ENCODE measurements at regions of chr10 and their contacts with region 1.

Region 1: GRCh38 chr10:22714479-22715289 is at the start of gene PIP4K2A:
- DNase-seq: peak; percentile 72
- H3K4me3 Mint-ChIP-seq: peak within 1 kb of the TSS; percentile 88
- H3K27ac Mint-ChIP-seq: peak within 1 kb of the TSS; percentile 85
- H3K4me1 Mint-ChIP-seq: peaks cover 39% of the 10 kb centered on the region
- H3K27me3 Mint-ChIP-seq: no peaks in the 10 kb centered on the region
- total RNA-seq, gene PIP4K2A: 92.7 and 104 TPM in 2 replicates

Region 2: DNA sequence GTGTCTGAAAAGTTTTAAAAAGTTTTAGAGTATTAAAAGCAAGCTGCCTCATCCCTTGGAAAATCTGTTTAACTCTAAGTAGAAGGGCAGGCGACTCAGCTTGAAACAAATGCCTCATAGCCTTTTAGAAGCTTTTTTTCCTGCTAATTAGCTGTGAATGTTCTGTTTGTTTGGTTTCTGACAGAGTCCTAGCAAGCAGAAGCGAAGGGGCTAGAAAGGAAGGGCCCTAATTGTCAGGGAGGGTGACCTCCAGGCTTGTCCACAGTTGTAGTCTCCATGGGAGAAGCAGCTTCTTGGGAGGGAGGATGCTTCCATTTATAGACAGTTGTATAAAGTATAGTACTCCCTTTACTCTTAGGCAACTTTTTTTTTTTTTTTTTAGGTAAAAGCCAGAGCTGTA is 802.1 kb before region 1 on chr10:
- intact Hi-C with region 1: no loop called
- DNase-seq: no peak
- H3K4me3 Mint-ChIP-seq: no peak overlapping the region
- H3K27ac Mint-ChIP-seq: no peak overlapping the region
- H3K4me1 Mint-ChIP-seq: peaks cover 21% of the 10 kb centered on the region
- H3K27me3 Mint-ChIP-seq: no peaks in the 10 kb centered on the region

Region 3: DNA sequence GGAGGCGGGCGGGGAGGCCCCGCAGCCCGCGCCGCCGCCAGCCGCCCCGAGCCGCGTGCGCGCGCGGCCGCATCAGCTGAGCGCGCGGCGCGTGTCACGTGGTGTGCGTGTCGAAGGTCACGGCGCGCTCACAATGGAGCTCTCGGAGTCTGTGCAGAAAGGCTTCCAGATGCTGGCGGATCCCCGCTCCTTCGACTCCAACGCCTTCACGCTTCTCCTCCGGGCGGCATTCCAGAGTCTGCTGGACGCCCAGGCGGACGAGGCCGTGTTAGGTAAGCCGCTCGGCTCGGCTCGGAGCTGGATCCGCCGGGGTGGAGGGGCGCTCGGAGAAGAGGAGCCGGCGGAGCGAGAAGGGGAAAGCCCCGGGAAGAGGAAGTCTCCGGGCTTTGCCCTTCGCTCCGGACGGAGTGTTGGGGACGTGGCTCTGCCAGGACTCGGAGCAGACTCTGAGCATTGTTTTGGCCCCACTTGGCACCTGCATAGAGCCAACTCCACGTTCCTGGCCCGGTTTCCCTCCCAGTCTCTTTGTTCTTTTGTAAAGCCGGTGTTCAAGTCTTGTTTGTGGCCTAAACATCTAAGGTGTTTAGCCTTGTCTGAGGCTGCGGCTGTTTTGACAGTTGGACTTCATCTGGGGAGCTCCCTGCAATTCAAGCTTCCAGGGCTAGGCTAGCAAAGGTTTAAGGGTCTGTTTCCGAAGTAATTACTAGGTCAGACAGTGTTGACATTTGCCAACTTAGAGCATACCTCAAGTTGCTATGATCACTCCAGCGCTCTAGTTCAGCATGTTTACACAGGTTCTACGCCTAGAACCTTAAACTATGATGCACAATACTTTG is 398.2 kb before region 1 on chr10 and contains the start of gene COMMD3:
- intact Hi-C with region 1: loop called (anchors 5 kb)
- DNase-seq: peak; percentile 77
- H3K4me3 Mint-ChIP-seq: peak within 1 kb of the TSS; percentile 98
- H3K27ac Mint-ChIP-seq: peak within 1 kb of the TSS; percentile 100
- H3K4me1 Mint-ChIP-seq: peaks cover 50% of the 10 kb centered on the region
- H3K27me3 Mint-ChIP-seq: peaks cover 2% of the 10 kb centered on the region
- total RNA-seq, gene COMMD3: 78.7 and 84.4 TPM in 2 replicates

Region 4: DNA sequence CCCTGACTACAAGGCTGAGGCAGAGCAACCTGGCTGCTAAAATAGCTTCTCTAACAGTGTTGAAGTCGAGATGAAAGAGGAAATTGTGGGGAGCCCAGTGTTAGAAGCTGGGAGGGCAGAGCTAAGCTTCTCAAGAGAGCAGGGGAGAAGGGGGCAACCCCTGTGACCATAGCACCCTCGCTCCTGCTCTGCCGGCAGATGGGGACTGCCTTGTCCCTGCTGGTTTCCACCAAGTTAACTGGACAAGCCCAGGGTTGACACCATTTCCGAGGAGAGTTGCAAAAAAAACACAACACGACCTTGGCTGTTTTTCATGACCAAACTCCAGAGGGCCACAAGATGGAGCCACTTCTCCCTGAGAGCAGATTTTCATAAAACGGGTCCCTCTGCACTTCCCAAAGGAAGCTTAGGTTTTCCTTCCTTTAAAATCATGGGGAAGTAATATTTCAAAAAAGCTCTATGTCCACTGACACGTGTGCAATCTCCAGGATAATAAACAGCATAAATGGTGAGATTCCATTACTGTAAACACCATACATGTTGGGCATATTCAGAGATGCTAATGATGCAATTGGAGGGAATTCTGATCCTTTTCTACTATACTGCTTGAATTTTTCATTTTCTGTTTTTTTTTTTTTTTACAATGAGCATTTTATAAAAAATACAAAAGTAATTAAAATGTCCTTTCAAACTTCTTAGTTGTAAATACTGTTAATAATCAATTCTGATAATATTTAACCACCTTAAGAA is 140.7 kb before region 1 on chr10:
- intact Hi-C with region 1: loop called (anchors 2 kb)
- DNase-seq: no peak
- H3K4me3 Mint-ChIP-seq: no peak overlapping the region
- H3K27ac Mint-ChIP-seq: peak overlapping the region; percentile 44
- H3K4me1 Mint-ChIP-seq: peaks cover 46% of the 10 kb centered on the region
- H3K27me3 Mint-ChIP-seq: no peaks in the 10 kb centered on the region

Region 5: DNA sequence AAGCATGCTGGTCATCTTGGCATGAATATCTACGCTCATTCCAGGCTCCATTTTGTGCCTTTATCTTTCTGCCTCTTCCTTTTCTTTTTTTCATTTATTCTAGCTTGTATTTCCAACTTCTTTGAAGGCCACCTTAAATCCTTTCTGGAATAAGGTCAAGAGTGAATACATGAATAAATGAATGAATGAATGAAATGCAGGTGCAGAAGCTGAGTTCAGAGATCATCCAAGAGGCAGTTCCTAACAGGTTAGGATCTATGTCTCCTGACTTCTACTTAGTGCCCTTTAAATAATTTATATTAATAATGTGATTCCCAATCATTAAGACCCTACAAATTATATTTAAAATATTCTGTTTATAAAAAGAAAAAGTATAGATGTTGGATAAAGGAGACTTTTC is 126.2 kb before region 1 on chr10:
- intact Hi-C with region 1: no loop called
- DNase-seq: no peak
- H3K4me3 Mint-ChIP-seq: no peak overlapping the region
- H3K27ac Mint-ChIP-seq: no peak overlapping the region
- H3K4me1 Mint-ChIP-seq: peaks cover 5% of the 10 kb centered on the region
- H3K27me3 Mint-ChIP-seq: no peaks in the 10 kb centered on the region

Region 6: DNA sequence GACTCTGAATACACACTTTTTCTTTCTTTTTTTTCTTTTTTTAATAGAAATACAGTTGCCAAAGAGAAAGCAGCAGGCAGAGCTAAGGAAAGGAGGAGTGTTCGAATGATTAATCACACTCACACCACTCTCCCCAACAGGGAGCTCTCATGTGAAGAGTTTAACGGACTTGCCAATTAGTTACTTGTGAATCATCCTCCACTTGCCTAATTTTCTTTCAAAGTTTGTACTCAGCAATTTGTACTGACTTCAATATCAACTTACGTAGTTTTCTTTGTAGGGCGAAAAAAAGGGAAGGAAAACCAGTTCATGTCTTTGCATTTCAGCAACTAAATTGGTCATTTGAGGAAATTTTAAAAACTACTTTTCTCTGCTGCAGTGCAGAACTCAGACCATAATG is 109.5 kb before region 1 on chr10:
- intact Hi-C with region 1: no loop called
- DNase-seq: no peak
- H3K4me3 Mint-ChIP-seq: peak overlapping the region; percentile 24
- H3K27ac Mint-ChIP-seq: no peak overlapping the region
- H3K4me1 Mint-ChIP-seq: peaks cover 70% of the 10 kb centered on the region
- H3K27me3 Mint-ChIP-seq: no peaks in the 10 kb centered on the region

Region 7: DNA sequence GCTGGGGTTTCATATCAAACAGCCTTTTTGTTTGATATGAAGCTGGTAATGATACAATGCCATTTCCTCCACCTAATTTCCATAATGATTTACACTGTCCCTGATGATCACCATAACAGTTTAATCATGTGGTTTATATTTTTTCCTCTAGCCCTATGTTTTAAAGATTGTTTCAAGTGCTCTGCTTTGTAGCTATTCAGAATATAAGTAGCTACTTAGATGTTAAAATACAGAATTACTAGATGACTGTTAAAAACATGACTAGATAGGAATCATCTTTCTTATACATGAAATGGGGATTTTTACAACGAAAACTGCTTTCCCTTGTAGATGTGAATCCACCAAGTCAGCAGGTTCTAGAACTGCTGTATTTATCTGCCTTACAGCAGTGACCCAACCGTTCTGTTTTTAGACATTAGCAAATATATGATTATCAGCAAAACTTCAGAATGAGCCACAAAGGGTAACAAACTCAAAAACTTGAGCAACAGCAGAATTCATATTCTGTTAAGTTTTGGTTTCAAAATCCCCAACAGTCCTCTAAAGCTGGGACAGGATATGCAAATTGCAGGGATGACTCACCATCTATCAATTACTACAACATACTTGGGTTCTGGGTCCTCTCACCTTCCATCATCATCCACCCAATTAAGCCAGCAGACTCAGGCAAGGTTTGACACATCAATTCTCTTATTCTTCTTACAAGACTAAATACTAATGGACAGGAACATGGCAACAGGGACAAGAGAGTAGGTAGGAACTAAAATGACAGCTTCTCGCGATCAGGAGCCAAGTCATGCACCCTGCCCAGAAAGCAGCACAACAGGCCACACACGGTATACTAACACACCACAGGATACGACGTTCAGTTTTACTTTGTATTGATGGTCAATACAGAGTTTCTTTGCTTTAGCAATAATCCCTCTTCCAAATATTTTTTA is 84.2 kb before region 1 on chr10:
- intact Hi-C with region 1: loop called (anchors 1 kb)
- DNase-seq: no peak
- H3K4me3 Mint-ChIP-seq: peak overlapping the region; percentile 74
- H3K27ac Mint-ChIP-seq: peak overlapping the region; percentile 100
- H3K4me1 Mint-ChIP-seq: peaks cover 94% of the 10 kb centered on the region
- H3K27me3 Mint-ChIP-seq: no peaks in the 10 kb centered on the region

Region 8: GRCh38 chr10:22682237-22683139 is 32.2 kb before region 1 on chr10:
- intact Hi-C with region 1: loop called (anchors 1 kb)
- DNase-seq: peak; percentile 63
- H3K4me3 Mint-ChIP-seq: peak overlapping the region; percentile 76
- H3K27ac Mint-ChIP-seq: peak overlapping the region; percentile 99
- H3K4me1 Mint-ChIP-seq: peaks cover 87% of the 10 kb centered on the region
- H3K27me3 Mint-ChIP-seq: no peaks in the 10 kb centered on the region

Region 9: GRCh38 chr10:22825853-22826346 is 111.2 kb after region 1 on chr10:
- intact Hi-C with region 1: no loop called
- DNase-seq: no peak
- H3K4me3 Mint-ChIP-seq: no peak overlapping the region
- H3K27ac Mint-ChIP-seq: no peak overlapping the region
- H3K4me1 Mint-ChIP-seq: no peaks in the 10 kb centered on the region
- H3K27me3 Mint-ChIP-seq: peaks cover 2% of the 10 kb centered on the region